ENCODE measurements at regions of chr11 and their contacts with region 1.

Region 1: GRCh38 chr11:3849297-3849874 is 6.1 kb upstream of the STIM1 start:
- DNase-seq: peak in 4 of 5 donors; percentile 32 to 63 (median 52)
- H3K4me3 ChIP-seq: no peak overlapping the region
- H3K4me3 Mint-ChIP-seq: peak overlapping the region in 1 of 7 donors; percentile 58
- H3K27ac ChIP-seq: no peak overlapping the region
- H3K27ac Mint-ChIP-seq: peak overlapping the region in 6 of 8 donors; percentile 27 to 83 (median 54)
- H3K4me1 ChIP-seq: peaks cover 23% of the 10 kb centered on the region
- H3K4me1 Mint-ChIP-seq: peaks cover 26 to 28% (median 28%) of the 10 kb centered on the region in 3 donors
- H3K27me3 ChIP-seq: no peaks in the 10 kb centered on the region
- H3K27me3 Mint-ChIP-seq: peaks cover 0 to 6% of the 10 kb centered on the region in 2 donors

Region 2: GRCh38 chr11:3867209-3868091 is 18.1 kb after region 1 on chr11:
- CTCF ChIA-PET with region 1: interaction called, 127 read pairs
- POLR2A ChIA-PET with region 1: interaction called, 13 read pairs
- DNase-seq: no peak
- H3K4me3 ChIP-seq: peak overlapping the region; percentile 3
- H3K4me3 Mint-ChIP-seq: peak overlapping the region in 6 of 7 donors; percentile 13 to 55 (median 34)
- H3K27ac ChIP-seq: peak overlapping the region; percentile 63
- H3K27ac Mint-ChIP-seq: peak overlapping the region; percentile 26 to 91 (median 84)
- H3K4me1 ChIP-seq: peaks cover 87% of the 10 kb centered on the region
- H3K4me1 Mint-ChIP-seq: peaks cover 83 to 90% (median 89%) of the 10 kb centered on the region in 3 donors
- H3K27me3 ChIP-seq: no peaks in the 10 kb centered on the region
- H3K27me3 Mint-ChIP-seq: no peaks in the 10 kb centered on the region

Measured in CD8-positive, alpha-beta memory T cell (primary cell).